ENCODE measurements at regions of chr6 and their contacts with region 1.

Region 1: DNA sequence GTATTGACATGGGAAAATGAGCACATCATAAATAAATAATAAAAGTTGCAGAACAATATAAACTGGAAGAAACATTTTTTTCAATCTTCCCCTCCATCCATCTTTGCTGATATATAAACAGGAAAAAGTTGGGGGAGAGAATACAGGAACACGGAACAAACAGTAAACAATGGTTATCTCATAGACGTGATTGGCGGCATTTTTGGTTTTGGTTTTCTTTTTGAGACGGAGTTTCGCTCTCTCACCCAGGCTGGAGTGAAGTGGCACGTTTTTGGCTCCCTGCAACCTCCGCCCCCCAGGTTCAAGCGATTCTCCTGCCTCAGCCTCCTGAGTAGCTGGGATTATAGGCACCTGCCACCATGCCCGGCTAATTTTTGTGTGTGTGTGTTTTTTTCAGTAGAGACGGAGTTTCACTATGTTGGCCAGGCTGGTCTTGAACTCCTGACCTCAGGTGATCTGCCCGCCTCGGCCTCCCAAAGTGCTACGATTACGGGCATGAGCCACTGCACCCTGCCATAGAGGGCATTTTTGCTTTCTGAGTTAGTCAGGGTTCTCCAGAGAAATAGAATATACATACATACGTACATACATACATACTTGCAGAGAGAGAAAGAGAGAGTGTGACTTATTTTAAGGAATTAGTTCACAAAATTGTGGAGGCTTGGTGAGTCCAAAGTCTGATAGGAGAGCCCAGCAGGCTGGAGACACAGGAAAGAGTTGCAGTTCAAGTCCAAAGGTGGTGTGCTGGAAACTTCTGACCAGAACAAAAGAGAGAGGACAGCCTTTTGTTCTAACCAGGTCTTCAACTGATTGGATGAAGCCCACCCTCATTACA is 22.6 kb downstream of the GNL1 start:
- DNase-seq: peak; percentile 57
- ATAC-seq: peak; percentile 63
- H3K4me3 Mint-ChIP-seq: peak overlapping the region; percentile 77
- H3K27ac Mint-ChIP-seq: peak overlapping the region; percentile 93
- H3K4me1 Mint-ChIP-seq: peaks cover 37% of the 10 kb centered on the region
- H3K27me3 Mint-ChIP-seq: no peaks in the 10 kb centered on the region

Region 2: GRCh38 chr6:30453508-30454116 is 80.1 kb before region 1 on chr6:
- CTCF ChIA-PET with region 1: interaction called, 10 read pairs
- DNase-seq: peak; percentile 88
- ATAC-seq: peak; percentile 83
- H3K4me3 Mint-ChIP-seq: no peak overlapping the region
- H3K27ac Mint-ChIP-seq: no peak overlapping the region
- H3K4me1 Mint-ChIP-seq: peaks cover 30% of the 10 kb centered on the region
- H3K27me3 Mint-ChIP-seq: peaks cover 92% of the 10 kb centered on the region

Region 3: DNA sequence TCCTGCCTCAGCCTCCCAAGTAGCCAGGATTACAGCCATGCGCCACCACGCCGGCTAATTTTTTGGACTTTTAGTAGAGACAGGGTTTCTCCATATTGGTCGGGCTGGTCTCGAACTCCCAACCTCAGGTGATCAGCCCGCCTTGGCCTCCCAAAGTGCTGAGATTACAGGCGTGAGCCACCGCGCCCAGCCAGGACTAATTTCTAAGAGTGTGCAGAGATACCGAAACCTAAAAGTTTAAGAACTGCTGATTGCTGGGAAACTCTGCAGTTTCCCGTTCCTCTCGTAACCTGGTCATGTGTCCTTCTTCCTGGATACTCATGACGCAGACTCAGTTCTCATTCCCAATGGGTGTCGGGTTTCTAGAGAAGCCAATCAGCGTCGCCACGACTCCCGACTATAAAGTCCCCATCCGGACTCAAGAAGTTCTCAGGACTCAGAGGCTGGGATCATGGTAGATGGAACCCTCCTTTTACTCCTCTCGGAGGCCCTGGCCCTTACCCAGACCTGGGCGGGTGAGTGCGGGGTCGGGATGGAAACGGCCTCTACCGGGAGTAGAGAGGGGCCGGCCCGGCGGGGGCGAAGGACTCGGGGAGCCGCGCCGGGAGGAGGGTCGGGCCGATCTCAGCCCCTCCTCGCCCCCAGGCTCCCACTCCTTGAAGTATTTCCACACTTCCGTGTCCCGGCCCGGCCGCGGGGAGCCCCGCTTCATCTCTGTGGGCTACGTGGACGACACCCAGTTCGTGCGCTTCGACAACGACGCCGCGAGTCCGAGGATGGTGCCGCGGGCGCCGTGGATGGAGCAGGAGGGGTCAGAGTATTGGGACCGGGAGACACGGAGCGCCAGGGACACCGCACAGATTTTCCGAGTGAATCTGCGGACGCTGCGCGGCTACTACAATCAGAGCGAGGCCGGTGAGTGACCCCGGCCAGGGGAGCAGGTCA is 44.3 kb before region 1 on chr6 and contains the start of gene HLA-E:
- CTCF ChIA-PET with region 1: interaction called, 305 read pairs
- DNase-seq: peak; percentile 96
- ATAC-seq: peak; percentile 83
- H3K4me3 Mint-ChIP-seq: peak within 1 kb of the TSS; percentile 99
- H3K27ac Mint-ChIP-seq: peak within 1 kb of the TSS; percentile 98
- H3K4me1 Mint-ChIP-seq: peaks cover 50% of the 10 kb centered on the region
- H3K27me3 Mint-ChIP-seq: peaks cover 2% of the 10 kb centered on the region
- total RNA-seq, gene HLA-E: 395 to 602 TPM

Region 4: GRCh38 chr6:30500421-30501355 is 33.0 kb before region 1 on chr6:
- CTCF ChIA-PET with region 1: interaction called, 17 read pairs
- DNase-seq: no peak
- ATAC-seq: peak; percentile 14
- H3K4me3 Mint-ChIP-seq: peak overlapping the region; percentile 30
- H3K27ac Mint-ChIP-seq: no peak overlapping the region
- H3K4me1 Mint-ChIP-seq: peaks cover 25% of the 10 kb centered on the region
- H3K27me3 Mint-ChIP-seq: no peaks in the 10 kb centered on the region

Region 5: GRCh38 chr6:30508890-30509736 is 24.6 kb before region 1 on chr6:
- CTCF ChIA-PET with region 1: interaction called, 27 read pairs
- DNase-seq: no peak
- ATAC-seq: peak; percentile 76
- H3K4me3 Mint-ChIP-seq: peak overlapping the region; percentile 48
- H3K27ac Mint-ChIP-seq: peak overlapping the region; percentile 90
- H3K4me1 Mint-ChIP-seq: peaks cover 46% of the 10 kb centered on the region
- H3K27me3 Mint-ChIP-seq: no peaks in the 10 kb centered on the region

Region 6: GRCh38 chr6:30515932-30516753 is 17.5 kb before region 1 on chr6:
- CTCF ChIA-PET with region 1: interaction called, 42 read pairs
- DNase-seq: peak; percentile 97
- ATAC-seq: peak; percentile 94
- H3K4me3 Mint-ChIP-seq: peak overlapping the region; percentile 74
- H3K27ac Mint-ChIP-seq: peak overlapping the region; percentile 92
- H3K4me1 Mint-ChIP-seq: peaks cover 37% of the 10 kb centered on the region
- H3K27me3 Mint-ChIP-seq: no peaks in the 10 kb centered on the region

Region 7: DNA sequence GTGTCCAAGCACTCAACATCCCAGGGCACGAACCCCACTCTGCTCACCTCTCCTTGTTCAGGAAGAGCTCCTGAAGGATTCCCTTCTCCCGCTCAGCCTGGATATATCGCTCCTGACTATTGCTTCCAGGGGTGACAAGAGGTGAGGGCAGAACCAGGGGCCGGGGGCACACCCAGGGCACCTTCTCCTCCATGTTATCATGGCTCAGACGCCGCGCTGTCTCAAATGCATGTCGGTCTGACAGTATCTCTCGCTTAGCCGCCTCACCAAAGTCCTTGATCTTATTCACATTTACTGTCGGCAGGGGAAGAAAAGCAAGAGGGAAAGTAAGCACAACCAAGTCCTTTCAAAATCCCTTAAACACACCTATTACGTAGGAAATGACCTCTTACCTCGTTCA is 70.3 kb after region 1 on chr6:
- CTCF ChIA-PET with region 1: no interaction called
- DNase-seq: no peak
- ATAC-seq: no peak
- H3K4me3 Mint-ChIP-seq: no peak overlapping the region
- H3K27ac Mint-ChIP-seq: no peak overlapping the region
- H3K4me1 Mint-ChIP-seq: peaks cover 20% of the 10 kb centered on the region
- H3K27me3 Mint-ChIP-seq: no peaks in the 10 kb centered on the region